Kidney (tissue), 22 donors: ENCODE measurements at regions of chr17 and their contacts with region 1.

Region 1: DNA sequence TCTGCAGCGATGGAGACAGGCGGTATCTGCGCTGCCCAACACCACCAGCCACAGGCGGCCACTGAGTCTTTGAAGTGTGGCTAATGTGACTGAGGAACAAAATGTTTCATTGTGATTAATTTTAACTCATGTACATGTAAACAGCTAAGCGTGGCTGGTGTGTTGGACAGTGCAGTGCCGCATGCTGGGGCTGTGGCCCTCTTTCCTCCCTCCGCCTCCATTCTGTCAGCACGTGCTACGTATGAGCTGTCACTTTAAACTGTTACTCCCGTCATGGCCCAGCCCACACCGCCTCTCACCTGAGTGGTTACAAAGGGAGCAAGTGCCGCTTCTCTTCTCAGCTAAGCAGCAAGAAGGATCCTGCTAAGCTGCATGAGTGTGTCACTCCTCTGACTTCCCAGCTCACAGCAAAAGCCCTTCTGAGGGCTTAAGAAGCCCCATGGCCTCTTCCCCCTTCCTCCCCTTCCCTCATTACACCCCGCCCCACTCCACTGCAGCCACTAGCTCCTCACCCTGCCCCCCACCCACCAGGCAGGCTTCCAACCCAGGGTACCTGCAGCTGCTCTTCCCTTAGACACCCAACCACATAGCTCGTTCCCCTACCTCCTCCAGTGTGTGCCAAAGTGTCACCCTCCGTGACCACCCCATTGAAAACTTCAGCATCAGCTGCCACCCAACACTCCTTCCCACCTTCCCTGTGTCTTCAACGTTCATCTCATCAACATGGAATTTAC is 15.0 kb downstream of the HASPIN start:
- DNase-seq: peak; percentile 61 to 78 (median 69)
- H3K4me3 ChIP-seq: peak overlapping the region in 1 of 3 donors; percentile 35
- H3K27ac ChIP-seq: no peak overlapping the region
- H3K4me1 ChIP-seq: peaks cover 0 to 7% (median 6%) of the 10 kb centered on the region in 3 donors
- H3K27me3 ChIP-seq: no peaks in the 10 kb centered on the region
- CTCF ChIP-seq: no peak

Region 2: GRCh38 chr17:3845621-3846441 is 107.1 kb after region 1 on chr17 and contains the start of gene NCBP3:
- intact Hi-C with region 1: loop called (anchors 10 kb)
- DNase-seq: peak; percentile 94 to 98 (median 97)
- H3K4me3 ChIP-seq: peak within 1 kb of the TSS; percentile 31 to 86 (median 70)
- H3K27ac ChIP-seq: peak within 1 kb of the TSS; percentile 51 to 80
- H3K4me1 ChIP-seq: no peaks in the 10 kb centered on the region
- H3K27me3 ChIP-seq: no peaks in the 10 kb centered on the region
- CTCF ChIP-seq: peak; percentile 93
- total RNA-seq, gene NCBP3: 41.5 TPM

Region 3: GRCh38 chr17:3857121-3858100 is 118.7 kb after region 1 on chr17:
- intact Hi-C with region 1: no loop called
- DNase-seq: peak in 1 of 5 donors; percentile 55
- H3K4me3 ChIP-seq: no peak overlapping the region
- H3K27ac ChIP-seq: no peak overlapping the region
- H3K4me1 ChIP-seq: no peaks in the 10 kb centered on the region
- H3K27me3 ChIP-seq: no peaks in the 10 kb centered on the region
- CTCF ChIP-seq: no peak